CD4-positive, alpha-beta T cell (primary cell): ENCODE measurements at regions of chr18 and their contacts with region 1.

Region 1: GRCh38 chr18:8704361-8705279 is 736 bp upstream of the MTCL1 start:
- DNase-seq: peak; percentile 65 to 93 (median 86)
- ATAC-seq: peak; percentile 90
- H3K4me3 ChIP-seq: peak overlapping the region; percentile 87
- H3K4me3 Mint-ChIP-seq: peak overlapping the region; percentile 91
- H3K27ac ChIP-seq: no peak overlapping the region
- H3K27ac Mint-ChIP-seq: no peak overlapping the region
- H3K4me1 ChIP-seq: peaks cover 28% of the 10 kb centered on the region
- H3K4me1 Mint-ChIP-seq: peaks cover 22% of the 10 kb centered on the region
- H3K27me3 ChIP-seq: peaks cover 53 to 59% of the 10 kb centered on the region in 2 experiments
- H3K27me3 Mint-ChIP-seq: peaks cover 81% of the 10 kb centered on the region
- CTCF ChIP-seq: no peak

Region 2: GRCh38 chr18:8608795-8609658 is 95.6 kb before region 1 on chr18 and contains the start of gene RAB12:
- CTCF ChIA-PET with region 1: interaction called, 4 read pairs
- POLR2A ChIA-PET with region 1: interaction called, 4 read pairs
- intact Hi-C with region 1: loop called in 1 of 2 experiments (anchors 2 kb)
- DNase-seq: peak; percentile 74 to 95 (median 86)
- ATAC-seq: peak; percentile 84
- H3K4me3 ChIP-seq: peak within 1 kb of the TSS; percentile 92
- H3K4me3 Mint-ChIP-seq: peak within 1 kb of the TSS; percentile 92
- H3K27ac ChIP-seq: peak within 1 kb of the TSS in 1 of 2 donors; percentile 71
- H3K27ac Mint-ChIP-seq: peak within 1 kb of the TSS; percentile 87
- H3K4me1 ChIP-seq: peaks cover 40% of the 10 kb centered on the region
- H3K4me1 Mint-ChIP-seq: peaks cover 58% of the 10 kb centered on the region
- H3K27me3 ChIP-seq: no peaks in the 10 kb centered on the region
- H3K27me3 Mint-ChIP-seq: peaks cover 8% of the 10 kb centered on the region
- CTCF ChIP-seq: peak; percentile 61
- total RNA-seq, gene RAB12: 20.1 to 20.3 TPM

Region 3: GRCh38 chr18:8744656-8745055 is 40.0 kb after region 1 on chr18:
- CTCF ChIA-PET with region 1: no interaction called
- POLR2A ChIA-PET with region 1: interaction called, 3 read pairs
- intact Hi-C with region 1: loop called in 1 of 2 experiments (anchors 5 kb)
- DNase-seq: peak in 11 of 14 experiments; percentile 5 to 77 (median 40)
- ATAC-seq: peak; percentile 73
- H3K4me3 ChIP-seq: no peak overlapping the region
- H3K4me3 Mint-ChIP-seq: peak overlapping the region; percentile 64
- H3K27ac ChIP-seq: no peak overlapping the region
- H3K27ac Mint-ChIP-seq: peak overlapping the region; percentile 75
- H3K4me1 ChIP-seq: peaks cover 22% of the 10 kb centered on the region
- H3K4me1 Mint-ChIP-seq: peaks cover 52% of the 10 kb centered on the region
- H3K27me3 ChIP-seq: no peaks in the 10 kb centered on the region
- H3K27me3 Mint-ChIP-seq: no peaks in the 10 kb centered on the region
- CTCF ChIP-seq: no peak

Region 4: DNA sequence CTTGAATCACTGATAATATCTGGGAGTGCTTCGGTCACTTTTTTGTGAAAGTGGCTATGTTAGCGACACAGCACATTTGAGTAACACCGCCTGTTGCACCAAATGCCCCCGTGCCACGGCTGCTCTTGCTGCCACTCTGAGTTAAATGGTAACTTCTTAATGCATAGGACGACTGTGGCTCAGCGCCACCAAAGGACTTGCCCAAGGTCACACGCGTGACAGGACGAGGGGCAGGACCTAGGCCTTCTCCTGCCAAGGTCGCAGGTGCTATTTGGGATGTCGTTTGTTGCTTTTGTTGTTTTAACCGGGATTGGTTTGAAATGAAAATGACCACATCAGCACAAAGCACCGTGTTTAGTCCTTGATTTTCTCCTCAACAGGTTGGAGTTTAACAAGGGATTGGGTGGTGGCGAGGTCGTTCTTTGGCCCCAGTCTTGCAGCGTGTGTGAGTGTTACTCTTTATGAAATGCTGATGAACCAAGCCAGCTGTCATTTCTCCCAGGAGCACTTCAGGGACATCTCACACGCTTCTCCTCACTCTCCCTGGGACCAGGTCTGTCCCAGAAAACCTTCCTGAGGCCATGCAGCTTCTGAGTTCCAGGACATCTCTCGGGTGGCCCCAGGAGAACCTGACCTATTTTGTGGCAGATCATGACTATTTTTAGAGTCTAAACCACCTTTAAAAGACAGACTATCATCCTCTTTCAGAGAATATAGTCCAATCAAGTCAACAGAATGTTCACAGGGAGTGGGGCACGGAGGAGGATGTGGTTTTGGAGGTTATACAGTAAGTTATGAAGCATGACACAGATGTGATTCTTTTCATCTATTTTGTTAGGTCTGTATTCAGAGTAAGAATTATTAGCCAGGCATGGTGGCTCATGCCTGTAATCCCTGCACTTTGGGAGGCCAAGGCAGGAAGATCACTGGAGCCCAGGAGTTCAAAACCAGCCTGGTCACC is 50.7 kb after region 1 on chr18:
- CTCF ChIA-PET with region 1: no interaction called
- POLR2A ChIA-PET with region 1: no interaction called
- intact Hi-C with region 1: loop called in 1 of 2 experiments (anchors 5 kb)
- DNase-seq: peak; percentile 31 to 91 (median 44)
- ATAC-seq: peak; percentile 99
- H3K4me3 ChIP-seq: peak overlapping the region; percentile 10
- H3K4me3 Mint-ChIP-seq: peak overlapping the region; percentile 75
- H3K27ac ChIP-seq: no peak overlapping the region
- H3K27ac Mint-ChIP-seq: peak overlapping the region; percentile 43
- H3K4me1 ChIP-seq: peaks cover 31% of the 10 kb centered on the region
- H3K4me1 Mint-ChIP-seq: peaks cover 32% of the 10 kb centered on the region
- H3K27me3 ChIP-seq: no peaks in the 10 kb centered on the region
- H3K27me3 Mint-ChIP-seq: no peaks in the 10 kb centered on the region
- CTCF ChIP-seq: no peak

Region 5: DNA sequence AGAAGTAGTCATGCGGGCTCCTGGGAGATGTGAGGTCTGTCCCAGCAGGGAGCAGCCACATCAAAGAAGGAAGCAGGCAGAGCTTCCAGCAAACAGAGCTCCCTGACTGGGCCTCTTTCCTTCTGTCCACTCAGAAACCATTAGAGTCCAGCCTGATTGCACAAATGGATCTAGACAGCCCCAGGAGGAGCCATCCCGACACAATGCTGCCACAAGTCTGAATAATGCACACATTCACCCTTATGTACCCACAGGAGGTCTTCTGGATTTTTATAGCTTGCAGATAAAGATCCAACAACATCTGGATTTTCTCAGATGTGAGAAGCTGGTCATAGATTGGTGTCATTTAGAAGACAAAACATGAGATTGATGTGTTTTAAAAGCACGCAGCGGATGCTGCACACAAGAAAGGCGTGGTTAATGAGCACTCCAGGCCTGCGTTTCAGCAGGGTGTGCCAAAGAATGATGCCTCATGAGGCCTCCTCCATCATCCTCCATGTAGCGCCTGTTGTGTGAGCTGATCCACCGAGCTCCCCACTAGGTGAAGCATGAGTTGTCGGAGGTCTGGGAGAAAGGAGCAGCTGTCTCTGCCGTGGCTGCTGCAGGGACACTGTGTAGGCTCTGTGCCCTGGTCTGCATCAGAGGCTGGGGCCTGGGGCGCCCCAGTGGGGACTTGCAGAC is 61.3 kb after region 1 on chr18:
- CTCF ChIA-PET with region 1: no interaction called
- POLR2A ChIA-PET with region 1: no interaction called
- intact Hi-C with region 1: no loop called
- DNase-seq: no peak
- ATAC-seq: no peak
- H3K4me3 ChIP-seq: no peak overlapping the region
- H3K4me3 Mint-ChIP-seq: no peak overlapping the region
- H3K27ac ChIP-seq: no peak overlapping the region
- H3K27ac Mint-ChIP-seq: no peak overlapping the region
- H3K4me1 ChIP-seq: no peaks in the 10 kb centered on the region
- H3K4me1 Mint-ChIP-seq: no peaks in the 10 kb centered on the region
- H3K27me3 ChIP-seq: peaks cover 0 to 2% of the 10 kb centered on the region in 2 experiments
- H3K27me3 Mint-ChIP-seq: no peaks in the 10 kb centered on the region
- CTCF ChIP-seq: no peak

Region 6: GRCh38 chr18:9474983-9475642 is 770.5 kb after region 1 on chr18 and contains the start of gene RALBP1:
- CTCF ChIA-PET with region 1: no interaction called
- POLR2A ChIA-PET with region 1: no interaction called
- intact Hi-C with region 1: loop called in 1 of 2 experiments (anchors 5 kb)
- DNase-seq: peak; percentile 93 to 99 (median 97)
- ATAC-seq: peak; percentile 98
- H3K4me3 ChIP-seq: peak within 1 kb of the TSS; percentile 72
- H3K4me3 Mint-ChIP-seq: peak within 1 kb of the TSS; percentile 98
- H3K27ac ChIP-seq: peak within 1 kb of the TSS; percentile 57 to 59
- H3K27ac Mint-ChIP-seq: peak within 1 kb of the TSS; percentile 92
- H3K4me1 ChIP-seq: peaks cover 25% of the 10 kb centered on the region
- H3K4me1 Mint-ChIP-seq: peaks cover 33% of the 10 kb centered on the region
- H3K27me3 ChIP-seq: no peaks in the 10 kb centered on the region
- H3K27me3 Mint-ChIP-seq: peaks cover 4% of the 10 kb centered on the region
- CTCF ChIP-seq: no peak
- total RNA-seq, gene RALBP1: 6.5 to 7.8 TPM

Region 7: GRCh38 chr18:9614401-9615279 is 910.0 kb after region 1 on chr18 and contains the start of gene PPP4R1:
- CTCF ChIA-PET with region 1: no interaction called
- POLR2A ChIA-PET with region 1: no interaction called
- intact Hi-C with region 1: loop called in 1 of 2 experiments (anchors 5 kb)
- DNase-seq: peak; percentile 40 to 86 (median 66)
- ATAC-seq: peak; percentile 53
- H3K4me3 ChIP-seq: peak within 1 kb of the TSS; percentile 79
- H3K4me3 Mint-ChIP-seq: peak within 1 kb of the TSS; percentile 97
- H3K27ac ChIP-seq: peak within 1 kb of the TSS; percentile 33 to 53
- H3K27ac Mint-ChIP-seq: peak within 1 kb of the TSS; percentile 88
- H3K4me1 ChIP-seq: peaks cover 21% of the 10 kb centered on the region
- H3K4me1 Mint-ChIP-seq: peaks cover 37% of the 10 kb centered on the region
- H3K27me3 ChIP-seq: no peaks in the 10 kb centered on the region
- H3K27me3 Mint-ChIP-seq: no peaks in the 10 kb centered on the region
- CTCF ChIP-seq: no peak
- total RNA-seq, gene PPP4R1: 35.7 to 40.2 TPM

Region 8: GRCh38 chr18:10525371-10526210 is 1821.0 kb after region 1 on chr18 and contains the start of gene NAPG:
- CTCF ChIA-PET with region 1: no interaction called
- POLR2A ChIA-PET with region 1: no interaction called
- intact Hi-C with region 1: loop called in 1 of 2 experiments (anchors 5 kb)
- DNase-seq: peak; percentile 75 to 98 (median 86)
- ATAC-seq: peak; percentile 85
- H3K4me3 ChIP-seq: peak within 1 kb of the TSS; percentile 87
- H3K4me3 Mint-ChIP-seq: peak within 1 kb of the TSS; percentile 99
- H3K27ac ChIP-seq: peak within 1 kb of the TSS; percentile 55 to 86
- H3K27ac Mint-ChIP-seq: peak within 1 kb of the TSS; percentile 96
- H3K4me1 ChIP-seq: peaks cover 42% of the 10 kb centered on the region
- H3K4me1 Mint-ChIP-seq: peaks cover 56% of the 10 kb centered on the region
- H3K27me3 ChIP-seq: peaks cover 0 to 5% of the 10 kb centered on the region in 2 experiments
- H3K27me3 Mint-ChIP-seq: no peaks in the 10 kb centered on the region
- CTCF ChIP-seq: no peak
- total RNA-seq, gene NAPG: 25.9 to 27.3 TPM